ENCODE measurements at regions of chr17 and their contacts with region 1.

Region 1: GRCh38 chr17:57833179-57833939 is 16.5 kb downstream of the MRPS23 start:
- DNase-seq: no peak
- ATAC-seq: peak; percentile 95
- H3K4me3 ChIP-seq: 0 out of 2 replicates have a peak overlapping the region, but pooled peaks have one; percentile 4
- H3K27ac ChIP-seq: no peak overlapping the region
- H3K4me1 ChIP-seq: peaks cover 5% of the 10 kb centered on the region; the same call in 1 of the 2 replicates
- H3K27me3 ChIP-seq: no peaks in the 10 kb centered on the region
- CTCF ChIP-seq: peak; percentile 87 to 94 (median 92)
- EP300 ChIP-seq: no peak
- POLR2A ChIP-seq: no peak
- RAD21 ChIP-seq: peak; percentile 74

Region 2: GRCh38 chr17:57747221-57748017 is 85.9 kb before region 1 on chr17:
- CTCF ChIA-PET with region 1: interaction called, 28 read pairs
- POLR2A ChIA-PET with region 1: no interaction called
- RAD21 ChIA-PET with region 1: interaction called, 7 read pairs
- SMC1A ChIA-PET with region 1: interaction called, 5 read pairs
- in situ Hi-C with region 1: no loop called
- intact Hi-C with region 1: no loop called
- DNase-seq: no peak
- ATAC-seq: peak; percentile 83
- H3K4me3 ChIP-seq: no peak overlapping the region
- H3K27ac ChIP-seq: no peak overlapping the region
- H3K4me1 ChIP-seq: peaks cover 12% of the 10 kb centered on the region
- H3K27me3 ChIP-seq: no peaks in the 10 kb centered on the region; a peak in 2 of 4 replicates
- CTCF ChIP-seq: peak; percentile 79 to 87 (median 84)
- EP300 ChIP-seq: no peak
- POLR2A ChIP-seq: no peak
- RAD21 ChIP-seq: peak; percentile 94

Region 3: DNA sequence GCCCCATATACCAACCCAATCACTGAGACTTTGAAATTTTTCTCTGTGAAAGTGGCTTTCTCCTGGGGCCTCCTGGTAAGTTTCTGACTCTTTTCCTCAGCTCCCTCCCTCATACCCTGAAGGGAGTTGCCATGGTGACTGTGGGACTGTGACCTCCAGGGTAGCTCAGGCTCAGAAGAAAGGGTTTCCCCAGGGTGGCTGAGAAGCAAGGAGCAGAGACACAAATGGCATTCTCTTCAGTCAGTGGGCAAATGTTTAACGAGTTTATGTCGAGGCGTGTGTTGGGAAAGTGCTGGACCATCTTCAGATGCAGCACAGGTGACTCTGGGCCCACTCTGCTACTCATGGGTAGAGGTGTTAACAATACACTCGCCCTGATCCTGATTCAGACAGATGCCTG is 30.3 kb before region 1 on chr17:
- CTCF ChIA-PET with region 1: interaction called, 19 read pairs
- POLR2A ChIA-PET with region 1: no interaction called
- RAD21 ChIA-PET with region 1: interaction called, 3 read pairs
- SMC1A ChIA-PET with region 1: no interaction called
- in situ Hi-C with region 1: no loop called
- intact Hi-C with region 1: no loop called
- DNase-seq: no peak
- ATAC-seq: no peak
- H3K4me3 ChIP-seq: no peak overlapping the region
- H3K27ac ChIP-seq: no peak overlapping the region
- H3K4me1 ChIP-seq: no peaks in the 10 kb centered on the region
- H3K27me3 ChIP-seq: no peaks in the 10 kb centered on the region
- CTCF ChIP-seq: no peak
- EP300 ChIP-seq: no peak
- POLR2A ChIP-seq: no peak
- RAD21 ChIP-seq: no peak